Activated CD4-positive, alpha-beta T cell treated with anti-CD3 and anti-CD28 coated beads, Interleukin-2, amount 10 ng/mL, durations not matched to agents 24 days and 14 days (primary cell): ENCODE measurements at regions of chr22 and their contacts with region 1.

Region 1: GRCh38 chr22:39003165-39003638 is 10.9 kb upstream of the APOBEC3C start:
- DNase-seq: peak; percentile 92
- H3K4me3 Mint-ChIP-seq: no peak overlapping the region
- H3K27ac Mint-ChIP-seq: peak overlapping the region; percentile 69
- H3K4me1 Mint-ChIP-seq: peaks cover 9% of the 10 kb centered on the region
- H3K27me3 Mint-ChIP-seq: peaks cover 13% of the 10 kb centered on the region

Region 2: GRCh38 chr22:38927033-38927781 is 76.0 kb before region 1 on chr22:
- intact Hi-C with region 1: loop called (anchors 5 kb)
- DNase-seq: peak; percentile 85
- H3K4me3 Mint-ChIP-seq: peak overlapping the region; percentile 62
- H3K27ac Mint-ChIP-seq: no peak overlapping the region
- H3K4me1 Mint-ChIP-seq: peaks cover 6% of the 10 kb centered on the region
- H3K27me3 Mint-ChIP-seq: peaks cover 51% of the 10 kb centered on the region

Region 3: DNA sequence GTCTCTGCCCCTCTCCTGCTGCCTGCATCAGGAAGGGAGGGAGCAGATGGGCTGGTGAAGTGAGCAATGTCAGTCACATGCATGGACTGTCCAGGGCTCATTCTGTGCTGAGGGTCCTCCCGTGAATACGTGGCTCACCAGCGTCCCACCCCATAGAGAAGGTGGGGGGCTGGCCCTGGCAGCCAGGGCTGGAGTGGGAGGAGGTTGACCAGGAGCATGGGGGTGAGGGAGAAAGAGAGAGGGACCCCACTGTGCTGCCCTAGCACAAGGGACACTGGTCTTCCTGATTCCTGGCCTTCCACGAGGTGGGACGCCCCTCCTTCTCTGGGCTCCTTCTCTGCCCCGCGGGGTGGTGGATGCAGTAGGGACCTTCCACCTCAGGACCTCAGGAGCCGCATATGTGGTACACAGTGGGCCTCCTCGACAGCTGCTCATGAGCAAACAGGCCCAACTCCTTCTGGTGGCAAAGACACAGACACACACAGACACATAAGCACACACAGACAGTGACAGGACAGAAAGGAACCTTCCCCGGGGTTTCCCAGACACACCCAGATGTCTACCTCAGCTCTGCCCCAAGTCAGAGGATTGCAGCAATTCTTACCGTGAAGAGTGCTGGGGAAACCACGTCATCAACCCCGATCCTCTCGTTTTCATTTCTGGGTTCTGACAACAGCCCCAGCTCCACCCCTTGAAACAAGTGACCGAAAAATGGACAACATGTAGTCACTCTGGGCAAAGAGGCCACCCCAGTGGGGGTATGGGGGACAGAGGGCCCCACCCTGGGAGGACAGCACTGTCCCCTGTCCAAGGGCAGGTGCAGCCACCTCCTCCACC is 49.4 kb before region 1 on chr22:
- intact Hi-C with region 1: no loop called
- DNase-seq: peak; percentile 94
- H3K4me3 Mint-ChIP-seq: peak overlapping the region; percentile 73
- H3K27ac Mint-ChIP-seq: peak overlapping the region; percentile 98
- H3K4me1 Mint-ChIP-seq: peaks cover 49% of the 10 kb centered on the region
- H3K27me3 Mint-ChIP-seq: no peaks in the 10 kb centered on the region

Region 4: DNA sequence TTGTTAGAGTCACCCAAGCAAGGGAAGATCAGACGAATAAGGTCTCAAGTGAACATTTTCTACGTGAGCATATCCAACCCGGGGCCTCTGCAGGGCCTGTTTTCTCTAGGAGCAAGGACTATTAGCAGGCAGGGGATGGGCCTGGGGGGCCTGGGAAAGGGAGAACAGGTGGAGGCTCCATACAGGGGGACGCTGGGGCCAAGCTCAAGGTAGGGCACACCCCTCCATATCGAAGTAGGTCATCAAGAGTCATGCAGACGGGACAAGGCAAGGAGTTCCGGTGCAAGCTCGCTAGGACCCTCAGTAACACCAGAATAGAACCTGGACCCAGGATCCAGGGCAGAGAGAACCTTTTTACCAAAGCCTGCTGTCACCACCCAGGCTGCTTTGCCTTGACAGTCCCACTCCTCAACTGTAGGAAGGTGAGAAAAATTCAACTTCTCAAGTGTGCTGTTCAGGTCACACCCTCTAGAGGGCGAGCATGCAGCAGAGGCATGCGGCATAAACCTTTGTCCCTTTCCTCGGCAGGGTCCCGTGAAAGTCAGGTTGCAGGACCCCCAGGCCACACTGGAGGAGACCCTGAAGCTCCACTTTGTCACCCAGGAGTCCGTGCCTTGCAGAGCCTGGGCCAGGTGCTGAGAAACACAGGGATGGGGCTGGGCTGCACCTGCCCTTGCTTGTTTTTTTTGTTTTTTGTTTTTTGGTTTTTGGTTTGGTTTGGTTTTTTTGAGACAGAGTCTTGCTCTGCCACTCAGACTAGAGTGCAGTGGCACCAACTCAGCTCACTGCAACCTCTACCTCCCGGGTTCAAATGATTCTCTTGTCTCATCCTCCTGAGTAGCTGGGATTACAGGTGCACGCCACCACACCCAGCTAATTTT is 29.7 kb before region 1 on chr22:
- intact Hi-C with region 1: loop called (anchors 5 kb)
- DNase-seq: peak; percentile 89
- H3K4me3 Mint-ChIP-seq: no peak overlapping the region
- H3K27ac Mint-ChIP-seq: no peak overlapping the region
- H3K4me1 Mint-ChIP-seq: peaks cover 11% of the 10 kb centered on the region
- H3K27me3 Mint-ChIP-seq: peaks cover 19% of the 10 kb centered on the region

Region 5: DNA sequence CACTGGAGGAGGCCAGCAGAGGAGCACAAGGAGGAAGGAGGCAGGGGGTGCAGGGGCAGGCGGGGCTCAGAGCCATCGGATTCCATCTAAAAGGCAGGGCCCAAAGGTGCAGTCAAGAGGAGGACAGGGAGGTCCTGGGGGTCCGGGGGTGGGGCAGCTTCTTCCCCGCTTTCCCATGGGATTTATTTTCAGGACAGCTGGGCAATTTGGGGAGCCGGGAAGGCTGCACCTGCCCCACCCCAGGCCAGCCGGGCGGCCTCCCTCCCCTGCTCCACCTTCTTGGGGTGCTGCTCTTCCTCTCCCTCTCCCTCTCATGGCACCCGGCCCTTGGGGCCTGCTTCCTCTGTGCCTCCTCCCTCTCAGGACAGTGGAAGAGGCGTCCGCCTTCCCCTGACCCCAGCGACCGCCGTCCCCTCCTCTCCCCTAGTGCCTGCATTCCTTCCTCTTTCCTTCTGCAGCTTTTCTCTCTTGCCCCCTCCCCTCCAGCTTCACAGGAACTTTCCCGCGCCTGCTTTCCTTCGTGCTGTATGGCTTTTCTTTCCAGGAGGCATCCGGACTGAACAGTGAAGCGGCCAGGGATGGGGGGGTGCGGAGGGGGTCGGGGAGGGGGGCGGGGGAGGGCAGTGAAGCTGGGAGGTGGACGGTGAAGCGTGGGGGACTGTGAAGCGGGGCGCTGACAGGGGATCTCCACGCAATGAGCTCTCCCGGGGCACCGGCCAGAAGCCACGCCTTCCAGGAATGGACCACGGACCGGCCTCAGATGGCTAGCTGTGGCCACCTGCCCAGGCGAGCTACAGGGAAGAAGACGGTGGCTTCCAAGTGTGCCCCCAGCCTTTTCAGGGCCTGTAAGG is 120.8 kb after region 1 on chr22:
- intact Hi-C with region 1: no loop called
- DNase-seq: no peak
- H3K4me3 Mint-ChIP-seq: no peak overlapping the region
- H3K27ac Mint-ChIP-seq: no peak overlapping the region
- H3K4me1 Mint-ChIP-seq: peaks cover 4% of the 10 kb centered on the region
- H3K27me3 Mint-ChIP-seq: no peaks in the 10 kb centered on the region